ENCODE measurements at regions of chr3 and their contacts with region 1.

Region 1: DNA sequence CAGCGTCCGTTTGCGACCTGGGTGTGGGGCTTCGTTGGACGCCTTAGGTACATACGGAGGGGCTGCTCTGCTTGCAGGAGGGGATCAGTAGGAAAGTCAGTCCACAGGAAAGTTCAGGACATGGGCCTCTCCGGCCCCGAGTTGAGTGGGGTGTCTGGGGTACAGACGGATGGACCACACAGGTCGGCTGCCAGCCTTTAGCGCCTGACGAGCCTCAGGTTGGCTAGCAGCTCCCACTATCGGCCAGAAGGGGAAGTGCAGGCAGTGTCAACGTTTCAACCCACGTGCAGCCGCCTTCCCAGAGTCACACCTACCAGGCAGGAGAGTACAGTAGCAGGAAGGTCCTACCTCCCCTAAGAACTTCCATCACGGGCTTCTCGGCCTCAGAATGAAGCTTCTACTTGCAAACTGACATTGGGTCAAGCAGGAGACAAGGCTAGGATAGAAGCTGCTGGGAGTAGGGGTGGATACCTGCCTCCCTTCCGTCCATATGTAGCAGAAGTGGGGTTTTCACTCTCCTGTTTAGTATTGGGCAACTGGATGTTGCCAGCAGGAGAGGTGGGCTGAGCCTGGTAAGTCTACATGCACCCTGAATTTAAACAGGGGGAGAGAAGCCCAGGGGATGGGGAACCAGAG is 1.8 kb upstream of the SCN5A start:
- DNase-seq: peak; percentile 60
- H3K4me3 ChIP-seq: no peak overlapping the region
- H3K27ac ChIP-seq: no peak overlapping the region
- H3K4me1 ChIP-seq: no peaks in the 10 kb centered on the region
- H3K27me3 ChIP-seq: no peaks in the 10 kb centered on the region
- CTCF ChIP-seq: peak; percentile 71

Region 2: GRCh38 chr3:38054291-38055001 is 596.8 kb before region 1 on chr3:
- CTCF ChIA-PET with region 1: no interaction called
- POLR2A ChIA-PET with region 1: no interaction called
- intact Hi-C with region 1: no loop called
- DNase-seq: no peak
- H3K4me3 ChIP-seq: no peak overlapping the region
- H3K27ac ChIP-seq: no peak overlapping the region
- H3K4me1 ChIP-seq: no peaks in the 10 kb centered on the region
- H3K27me3 ChIP-seq: no peaks in the 10 kb centered on the region
- CTCF ChIP-seq: no peak

Region 3: DNA sequence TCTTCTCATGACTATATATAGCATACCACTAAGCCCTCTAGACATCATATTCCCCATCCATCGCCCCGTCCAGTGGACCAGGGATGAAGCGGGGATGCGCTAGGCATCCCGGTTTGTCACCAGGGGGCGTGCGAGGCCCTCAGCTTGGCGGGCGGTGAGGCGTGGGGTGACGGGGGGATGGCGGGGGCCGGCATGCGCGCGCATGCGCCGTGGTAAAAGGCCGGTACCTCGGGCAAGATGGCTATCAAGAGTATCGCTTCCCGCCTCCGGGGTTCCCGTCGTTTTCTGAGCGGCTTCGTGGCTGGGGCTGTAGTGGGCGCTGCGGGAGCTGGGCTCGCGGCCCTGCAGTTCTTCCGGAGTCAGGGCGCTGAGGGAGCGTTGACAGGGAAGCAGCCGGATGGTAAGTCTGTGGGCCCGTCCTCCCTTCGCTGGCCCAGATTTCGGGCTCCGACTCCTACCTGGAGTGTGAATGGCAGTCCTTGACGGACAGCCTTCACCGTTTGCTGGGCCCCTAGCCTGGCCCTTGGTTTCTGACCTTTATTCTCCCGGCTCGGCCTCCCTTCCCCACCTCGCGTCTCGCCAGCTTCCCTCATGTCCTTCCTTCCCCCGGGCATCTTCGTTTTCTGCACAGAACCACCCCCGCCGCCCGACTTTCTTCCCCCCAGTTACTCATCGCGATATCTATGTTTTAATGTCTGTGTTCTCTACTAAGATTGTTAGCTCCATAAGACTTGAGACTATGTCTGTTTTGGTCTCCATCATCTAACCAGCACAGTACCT is 155.0 kb before region 1 on chr3 and contains the start of gene EXOG:
- CTCF ChIA-PET with region 1: interaction called, 12 read pairs
- POLR2A ChIA-PET with region 1: interaction called, 20 read pairs
- intact Hi-C with region 1: no loop called
- DNase-seq: peak; percentile 89
- H3K4me3 ChIP-seq: peak within 1 kb of the TSS; percentile 56
- H3K27ac ChIP-seq: peak within 1 kb of the TSS; percentile 39
- H3K4me1 ChIP-seq: no peaks in the 10 kb centered on the region
- H3K27me3 ChIP-seq: no peaks in the 10 kb centered on the region
- CTCF ChIP-seq: peak; percentile 74
- total RNA-seq, gene EXOG: 8.2 and 12.4 TPM in 2 replicates

Region 4: DNA sequence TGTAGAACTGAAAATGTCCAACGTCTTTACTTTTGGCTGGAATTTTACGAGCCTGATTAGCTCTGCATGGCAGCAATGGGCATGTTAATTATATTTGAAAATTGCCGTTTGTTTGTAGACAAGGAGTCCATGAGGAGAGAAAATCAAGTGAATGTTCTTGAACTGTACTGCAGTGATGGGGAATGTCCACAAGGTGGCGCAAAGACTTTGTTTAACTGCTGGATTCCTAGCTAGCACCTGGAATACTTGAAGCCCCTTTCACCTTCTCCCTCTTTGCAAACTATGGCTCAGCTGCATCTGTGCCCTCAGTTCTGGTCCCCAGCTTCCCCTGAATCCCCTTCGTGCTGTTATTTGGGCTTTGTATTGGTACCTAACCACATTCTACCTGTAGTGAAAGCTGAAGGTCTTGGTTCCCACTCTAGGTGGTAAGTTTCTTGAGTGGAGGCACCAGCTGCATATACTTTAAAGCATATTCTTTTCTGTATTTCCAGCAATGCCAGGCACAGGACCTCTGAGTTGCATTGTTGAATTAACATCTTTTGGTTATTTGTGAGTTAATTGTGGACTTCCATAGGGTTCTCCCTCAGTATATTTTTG is 129.8 kb before region 1 on chr3:
- CTCF ChIA-PET with region 1: interaction called, 6 read pairs
- POLR2A ChIA-PET with region 1: no interaction called
- intact Hi-C with region 1: loop called (anchors 1 kb)
- DNase-seq: peak; percentile 47
- H3K4me3 ChIP-seq: no peak overlapping the region
- H3K27ac ChIP-seq: no peak overlapping the region
- H3K4me1 ChIP-seq: no peaks in the 10 kb centered on the region
- H3K27me3 ChIP-seq: no peaks in the 10 kb centered on the region
- CTCF ChIP-seq: peak; percentile 69